ENCODE measurements at regions of chr3 and their contacts with region 1.

Region 1: GRCh38 chr3:177610677-177611633 is 413.7 kb upstream of the TBL1XR1 start:
- DNase-seq: no peak
- ATAC-seq: no peak

Region 2: GRCh38 chr3:177102553-177102952 is 508.4 kb before region 1 on chr3:
- intact Hi-C with region 1: loop called (anchors 5 kb)
- DNase-seq: no peak
- ATAC-seq: no peak